Activated CD4-positive, alpha-beta memory T cell treated with anti-CD3 and anti-CD28 coated beads for 36 hours (primary cell): ENCODE measurements at regions of chr9 and their contacts with region 1.

Region 1: DNA sequence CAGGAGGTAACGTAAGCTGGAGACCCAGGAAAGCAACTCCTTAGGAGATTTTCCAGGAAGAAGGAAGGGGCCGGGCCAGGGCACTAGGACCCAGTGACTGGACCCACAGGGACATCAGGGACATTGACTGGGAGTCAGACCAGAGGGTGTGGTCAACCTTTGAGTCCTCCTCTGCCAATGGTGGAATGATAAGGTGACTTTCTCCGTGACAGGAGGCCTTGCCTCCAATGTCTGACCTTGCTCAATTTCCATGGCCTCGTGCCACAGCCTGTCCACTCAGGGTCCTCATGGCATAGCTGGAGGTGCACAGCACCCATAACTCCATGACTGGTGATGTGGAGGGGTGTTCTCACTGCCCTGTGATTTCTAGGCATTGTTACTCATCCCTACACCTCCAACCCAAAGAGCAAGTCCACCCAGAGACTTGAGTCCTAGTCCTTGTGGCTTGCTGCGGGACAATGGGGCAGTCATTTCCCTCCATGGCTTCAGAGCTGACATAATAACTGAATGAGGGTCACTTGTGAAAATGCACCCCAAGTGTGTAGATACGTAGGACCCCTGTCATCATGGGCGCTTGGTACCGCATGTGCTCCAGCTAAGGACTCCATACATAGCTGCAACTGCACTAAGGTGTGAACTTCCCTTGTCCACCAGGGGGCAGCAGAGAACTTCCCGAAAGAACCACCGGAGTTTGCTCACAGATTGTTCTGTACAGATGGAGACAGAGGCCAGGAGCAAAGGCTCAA is 4.1 kb upstream of the AMBP start:
- DNase-seq: peak; percentile 87
- H3K4me3 Mint-ChIP-seq: no peak overlapping the region
- H3K27ac Mint-ChIP-seq: no peak overlapping the region
- H3K4me1 Mint-ChIP-seq: no peaks in the 10 kb centered on the region
- H3K27me3 Mint-ChIP-seq: no peaks in the 10 kb centered on the region

Region 2: GRCh38 chr9:114096041-114096511 is 13.9 kb after region 1 on chr9:
- CTCF ChIA-PET with region 1: interaction called, 40 read pairs
- POLR2A ChIA-PET with region 1: no interaction called
- intact Hi-C with region 1: no loop called
- DNase-seq: peak; percentile 16
- H3K4me3 Mint-ChIP-seq: no peak overlapping the region
- H3K27ac Mint-ChIP-seq: no peak overlapping the region
- H3K4me1 Mint-ChIP-seq: peaks cover 5% of the 10 kb centered on the region
- H3K27me3 Mint-ChIP-seq: peaks cover 36% of the 10 kb centered on the region

Region 3: DNA sequence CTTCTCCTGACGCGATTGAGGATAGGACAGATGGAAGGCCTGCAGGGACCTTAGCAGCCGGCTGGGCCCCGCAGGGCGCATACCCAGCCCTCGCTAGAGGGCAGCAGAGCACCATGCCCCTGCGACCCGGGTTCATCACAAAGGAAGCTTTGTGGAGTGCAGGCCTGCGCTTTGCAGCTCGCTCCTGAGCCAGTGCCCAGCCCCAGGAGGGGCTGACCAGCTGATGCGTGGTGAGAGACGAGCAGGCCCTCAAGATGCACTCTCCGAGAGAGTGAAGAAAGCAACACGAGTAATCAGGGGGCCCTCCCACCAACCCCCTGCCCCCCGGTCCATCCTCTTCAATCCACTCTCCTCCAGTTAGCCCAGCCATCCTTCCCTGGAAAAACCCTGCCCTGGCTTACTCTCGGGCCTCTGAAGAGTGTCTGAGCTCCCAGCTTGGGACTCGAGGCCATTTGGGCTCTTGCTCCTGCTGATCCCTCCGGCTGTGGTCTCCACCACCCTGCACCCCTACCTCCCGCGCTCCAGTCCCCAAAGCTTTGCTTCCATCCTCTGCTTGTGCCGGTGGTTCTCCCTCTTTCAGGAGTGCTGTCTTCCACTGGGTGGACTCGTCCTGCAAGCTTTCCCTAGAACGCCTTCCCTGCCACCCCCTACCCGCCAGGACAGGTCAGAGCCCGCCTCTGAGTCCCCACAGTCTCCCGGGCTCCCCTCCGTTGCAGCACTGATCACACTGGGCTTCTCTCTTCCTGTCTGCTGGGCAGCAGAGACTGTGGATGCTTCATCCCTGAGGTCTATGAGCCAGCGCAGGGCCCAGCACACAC is 26.0 kb after region 1 on chr9:
- CTCF ChIA-PET with region 1: interaction called, 18 read pairs
- POLR2A ChIA-PET with region 1: no interaction called
- intact Hi-C with region 1: no loop called
- DNase-seq: peak; percentile 76
- H3K4me3 Mint-ChIP-seq: no peak overlapping the region
- H3K27ac Mint-ChIP-seq: no peak overlapping the region
- H3K4me1 Mint-ChIP-seq: no peaks in the 10 kb centered on the region
- H3K27me3 Mint-ChIP-seq: peaks cover 4% of the 10 kb centered on the region

Region 4: GRCh38 chr9:114155263-114155972 is 73.2 kb after region 1 on chr9 and contains the start of gene COL27A1:
- CTCF ChIA-PET with region 1: interaction called, 10 read pairs
- POLR2A ChIA-PET with region 1: no interaction called
- intact Hi-C with region 1: no loop called
- DNase-seq: peak; percentile 88
- H3K4me3 Mint-ChIP-seq: peak within 1 kb of the TSS; percentile 81
- H3K27ac Mint-ChIP-seq: peak within 1 kb of the TSS; percentile 50
- H3K4me1 Mint-ChIP-seq: peaks cover 18% of the 10 kb centered on the region
- H3K27me3 Mint-ChIP-seq: peaks cover 31% of the 10 kb centered on the region
- total RNA-seq, gene COL27A1: 4.0 to 4.1 TPM

Region 5: GRCh38 chr9:114291064-114291474 is 208.9 kb after region 1 on chr9:
- CTCF ChIA-PET with region 1: interaction called, 92 read pairs
- POLR2A ChIA-PET with region 1: no interaction called
- intact Hi-C with region 1: loop called (anchors 1 kb)
- DNase-seq: peak; percentile 81
- H3K4me3 Mint-ChIP-seq: no peak overlapping the region
- H3K27ac Mint-ChIP-seq: no peak overlapping the region
- H3K4me1 Mint-ChIP-seq: peaks cover 2% of the 10 kb centered on the region
- H3K27me3 Mint-ChIP-seq: peaks cover 3% of the 10 kb centered on the region

Region 6: DNA sequence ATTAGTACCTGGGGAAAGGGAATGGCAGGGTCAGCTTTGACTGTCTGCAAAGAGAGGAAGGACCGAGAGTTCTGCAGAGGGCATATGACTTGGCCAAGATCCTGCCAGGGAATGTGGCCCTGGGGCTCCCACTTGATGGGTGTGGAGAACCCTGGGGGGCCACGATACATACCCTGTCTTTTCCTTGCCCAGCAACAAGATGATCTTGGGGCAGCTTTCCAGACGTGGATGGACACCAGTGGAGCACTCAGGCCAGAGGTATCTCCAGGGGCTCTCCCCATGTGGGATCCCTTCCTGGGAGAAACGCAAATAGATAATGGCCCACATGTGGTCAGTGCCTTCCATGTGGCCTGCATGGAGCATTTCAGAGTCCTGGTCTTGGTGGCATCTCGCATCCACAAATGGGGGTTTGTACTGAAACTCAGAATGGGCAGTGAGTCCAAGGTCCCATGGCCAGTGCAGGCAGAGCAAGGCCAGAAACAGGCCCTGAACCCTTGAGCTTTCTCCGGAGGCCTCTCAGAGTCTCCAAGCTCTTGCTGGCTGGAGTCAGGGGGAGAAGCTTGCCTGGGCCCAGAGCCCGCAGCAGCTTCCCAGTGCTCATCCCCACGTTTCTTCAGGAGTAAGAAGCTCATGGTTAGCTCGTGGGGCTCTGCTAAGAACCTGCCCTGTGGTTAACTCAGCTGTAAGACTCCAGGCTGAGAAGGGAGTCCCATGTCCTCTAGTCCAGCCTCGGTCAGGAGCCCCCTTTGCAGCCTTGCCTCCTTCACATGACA is 222.4 kb after region 1 on chr9:
- CTCF ChIA-PET with region 1: interaction called, 5 read pairs
- POLR2A ChIA-PET with region 1: no interaction called
- intact Hi-C with region 1: loop called (anchors 1 kb)
- DNase-seq: peak; percentile 4
- H3K4me3 Mint-ChIP-seq: no peak overlapping the region
- H3K27ac Mint-ChIP-seq: no peak overlapping the region
- H3K4me1 Mint-ChIP-seq: peaks cover 4% of the 10 kb centered on the region
- H3K27me3 Mint-ChIP-seq: no peaks in the 10 kb centered on the region